ENCODE measurements at regions of chr5 and their contacts with region 1.

Region 1: GRCh38 chr5:34735491-34736363 is 79.6 kb downstream of the RAI14 start:
- DNase-seq: peak; percentile 80
- H3K4me3 Mint-ChIP-seq: peak overlapping the region; percentile 8
- H3K27ac Mint-ChIP-seq: peak overlapping the region; percentile 31
- H3K4me1 Mint-ChIP-seq: peaks cover 19% of the 10 kb centered on the region
- H3K27me3 Mint-ChIP-seq: no peaks in the 10 kb centered on the region
- CTCF ChIP-seq: no peak

Region 2: GRCh38 chr5:34686762-34687268 is 48.9 kb before region 1 on chr5:
- CTCF ChIA-PET with region 1: interaction called, 3 read pairs
- POLR2A ChIA-PET with region 1: interaction called, 10 read pairs
- intact Hi-C with region 1: no loop called
- DNase-seq: peak; percentile 93
- H3K4me3 Mint-ChIP-seq: peak overlapping the region; percentile 10
- H3K27ac Mint-ChIP-seq: peak overlapping the region; percentile 55
- H3K4me1 Mint-ChIP-seq: peaks cover 16% of the 10 kb centered on the region
- H3K27me3 Mint-ChIP-seq: no peaks in the 10 kb centered on the region
- CTCF ChIP-seq: no peak